Left cardiac atrium (tissue), 4 donors: ENCODE measurements at regions of chr2 and their contacts with region 1.

Region 1: GRCh38 chr2:112254466-112255239 is at the start of gene ZC3H8:
- DNase-seq: peak; percentile 96
- ATAC-seq: peak; percentile 99
- total RNA-seq, gene ZC3H8: 8.8 to 10.0 TPM

Region 2: DNA sequence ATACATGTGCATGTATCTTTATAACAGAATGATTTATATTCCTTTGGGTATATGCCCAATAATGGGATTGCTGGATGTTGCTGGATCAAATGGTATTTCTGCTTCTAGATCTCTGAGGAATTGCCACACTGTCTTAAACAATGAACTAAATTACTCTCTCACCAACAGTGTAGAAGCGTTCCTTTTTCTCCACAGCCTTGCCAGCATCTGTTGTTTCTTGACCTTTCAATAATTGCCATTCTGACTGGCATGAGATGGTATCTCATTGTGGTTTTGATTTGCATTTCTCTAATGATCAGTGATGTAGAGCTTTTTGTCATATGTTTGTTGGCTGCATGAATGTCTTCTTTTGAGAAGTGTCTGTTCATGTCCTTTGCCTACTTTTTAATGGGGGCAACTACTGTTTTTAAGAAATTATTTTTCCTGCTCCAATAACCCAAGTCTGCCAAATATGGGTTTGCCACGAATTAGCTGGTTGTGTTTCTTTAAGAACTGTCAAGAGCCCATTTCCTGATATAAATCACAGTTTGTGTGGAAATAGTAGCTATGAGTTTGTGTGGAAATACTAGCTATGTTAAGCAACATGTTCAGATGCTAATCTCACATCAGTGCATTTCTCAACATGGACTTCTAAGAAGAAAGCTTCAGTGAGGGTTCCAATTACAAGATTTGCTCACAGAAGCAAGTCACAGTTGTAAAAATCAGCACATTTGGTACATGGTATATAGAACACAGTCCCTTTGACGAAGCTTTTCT is 630.1 kb before region 1 on chr2:
- intact Hi-C with region 1: no loop called
- DNase-seq: no peak
- ATAC-seq: peak; percentile 65 to 70

Region 3: GRCh38 chr2:112121682-112122254 is 132.9 kb before region 1 on chr2:
- intact Hi-C with region 1: loop called in 1 of 2 experiments (anchors 10 kb)
- DNase-seq: no peak
- ATAC-seq: no peak

Region 4: GRCh38 chr2:112275306-112275886 is 20.7 kb after region 1 on chr2 and contains the start of gene ZC3H6:
- intact Hi-C with region 1: loop called in 1 of 2 experiments (anchors 1 kb)
- DNase-seq: peak; percentile 99
- ATAC-seq: peak; percentile 98 to 99
- total RNA-seq, gene ZC3H6: 18.7 to 20.0 TPM

Region 5: GRCh38 chr2:112433932-112434730 is 179.5 kb after region 1 on chr2:
- intact Hi-C with region 1: loop called in 1 of 2 experiments (anchors 5 kb)
- DNase-seq: peak; percentile 24
- ATAC-seq: no peak